HEK293T (cell line): ENCODE measurements at regions of chr12 and their contacts with region 1.

Region 1: DNA sequence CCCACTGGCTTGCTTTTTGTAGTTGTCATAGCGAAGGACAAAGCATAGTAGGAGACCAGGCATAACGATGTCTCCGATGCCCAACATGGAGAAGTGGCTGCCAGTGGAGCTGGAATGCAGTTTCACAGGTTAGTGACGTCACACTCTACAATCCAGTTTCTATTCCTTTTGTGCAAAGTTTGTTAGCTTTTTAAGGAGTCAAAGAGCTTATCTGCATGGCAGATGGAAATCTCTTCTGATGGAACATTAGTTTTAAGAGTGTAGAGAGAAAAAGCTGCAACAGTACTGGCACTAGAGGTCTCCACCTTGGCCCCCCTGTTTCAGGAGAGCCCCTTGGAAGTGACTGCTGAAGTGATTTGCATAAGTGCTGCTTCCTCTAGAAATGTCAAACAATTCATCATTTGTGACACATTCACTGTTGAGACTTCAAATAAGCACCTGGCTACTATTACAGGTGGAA is 41.9 kb downstream of the ACADS start:
- DNase-seq: no peak

Region 2: DNA sequence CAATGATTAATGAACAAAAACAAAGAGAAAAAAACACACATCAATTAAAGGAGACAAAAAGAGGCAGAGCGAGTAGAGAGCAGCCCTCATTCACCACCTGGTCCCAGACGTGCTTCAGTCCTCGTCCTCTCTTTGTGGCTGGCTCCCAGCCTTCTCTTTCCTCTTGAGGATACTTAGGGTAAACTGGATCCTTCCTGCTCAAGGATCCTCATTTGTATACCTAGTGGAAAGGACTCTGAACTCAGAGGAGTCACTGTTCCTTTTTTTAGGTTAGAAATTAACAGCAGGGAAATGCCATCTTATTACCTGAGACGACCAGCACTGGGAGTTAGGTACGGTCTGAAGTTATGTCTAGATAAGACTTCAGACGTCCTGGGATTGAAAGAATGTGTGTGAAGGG is 70.9 kb before region 1 on chr12:
- CTCF ChIA-PET with region 1: interaction called, 11 read pairs
- POLR2A ChIA-PET with region 1: no interaction called
- DNase-seq: no peak